ENCODE measurements at regions of chr11 and their contacts with region 1.

Region 1: GRCh38 chr11:47593934-47594855 is at the start of gene C1QTNF4:
- DNase-seq: no peak
- CTCF ChIP-seq: no peak

Region 2: DNA sequence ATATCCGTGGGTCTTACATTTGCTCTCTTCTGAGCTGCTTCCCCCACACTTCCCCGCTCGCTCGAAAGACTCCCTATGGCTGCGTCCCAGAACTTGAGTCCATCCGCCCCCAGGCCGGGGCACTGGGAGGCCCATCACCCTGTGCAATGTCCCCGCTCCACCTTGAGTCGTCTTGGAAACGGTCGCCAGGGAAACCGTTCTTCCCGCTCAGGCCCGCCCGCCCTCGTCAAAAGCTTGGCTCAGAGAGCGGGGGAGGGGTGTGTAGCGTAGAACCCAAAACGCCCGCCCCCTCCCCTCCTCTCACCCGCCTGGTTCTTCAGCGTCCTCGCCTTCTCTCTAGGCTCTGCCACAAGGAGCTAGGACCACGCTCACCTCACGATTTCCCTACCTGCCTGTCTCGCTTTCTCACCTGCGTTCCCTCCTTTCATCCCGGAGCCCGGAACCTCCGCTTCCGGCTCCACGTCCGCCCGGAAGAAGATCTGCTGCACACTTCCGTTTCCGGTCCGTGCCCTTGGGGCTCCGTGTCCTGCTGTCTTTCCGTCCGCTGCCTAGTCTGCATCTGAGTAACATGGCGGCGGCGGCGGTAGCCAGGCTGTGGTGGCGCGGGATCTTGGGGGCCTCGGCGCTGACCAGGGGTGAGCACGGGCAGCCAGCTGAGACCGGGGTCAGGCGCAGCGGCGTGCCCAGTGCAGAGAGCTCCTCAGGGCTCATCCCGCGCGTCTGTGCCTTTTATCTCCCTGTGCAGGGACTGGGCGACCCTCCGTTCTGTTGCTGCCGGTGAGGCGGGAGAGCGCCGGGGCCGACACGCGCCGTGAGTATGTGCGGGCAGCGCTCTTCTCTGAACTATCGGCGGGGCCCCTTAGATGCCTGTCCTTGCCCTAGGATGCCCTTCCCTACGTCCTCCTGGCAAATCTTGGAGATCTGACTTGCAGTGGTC is 15.4 kb before region 1 on chr11 and contains the starts of genes KBTBD4 and NDUFS3:
- CTCF ChIA-PET with region 1: interaction called, 10 read pairs
- POLR2A ChIA-PET with region 1: no interaction called
- DNase-seq: peak; percentile 93
- CTCF ChIP-seq: no peak

Region 3: GRCh38 chr11:47607380-47607779 is 13.2 kb after region 1 on chr11:
- CTCF ChIA-PET with region 1: interaction called, 17 read pairs
- POLR2A ChIA-PET with region 1: no interaction called
- DNase-seq: no peak
- CTCF ChIP-seq: no peak

Region 4: GRCh38 chr11:47616726-47617416 is 22.7 kb after region 1 on chr11:
- CTCF ChIA-PET with region 1: interaction called, 10 read pairs
- POLR2A ChIA-PET with region 1: no interaction called
- DNase-seq: peak; percentile 49
- CTCF ChIP-seq: peak; percentile 77

Region 5: GRCh38 chr11:48116437-48117228 is 522.4 kb after region 1 on chr11:
- CTCF ChIA-PET with region 1: no interaction called
- POLR2A ChIA-PET with region 1: no interaction called
- DNase-seq: no peak
- CTCF ChIP-seq: no peak